ENCODE measurements at regions of chr9 and their contacts with region 1.

Region 1: DNA sequence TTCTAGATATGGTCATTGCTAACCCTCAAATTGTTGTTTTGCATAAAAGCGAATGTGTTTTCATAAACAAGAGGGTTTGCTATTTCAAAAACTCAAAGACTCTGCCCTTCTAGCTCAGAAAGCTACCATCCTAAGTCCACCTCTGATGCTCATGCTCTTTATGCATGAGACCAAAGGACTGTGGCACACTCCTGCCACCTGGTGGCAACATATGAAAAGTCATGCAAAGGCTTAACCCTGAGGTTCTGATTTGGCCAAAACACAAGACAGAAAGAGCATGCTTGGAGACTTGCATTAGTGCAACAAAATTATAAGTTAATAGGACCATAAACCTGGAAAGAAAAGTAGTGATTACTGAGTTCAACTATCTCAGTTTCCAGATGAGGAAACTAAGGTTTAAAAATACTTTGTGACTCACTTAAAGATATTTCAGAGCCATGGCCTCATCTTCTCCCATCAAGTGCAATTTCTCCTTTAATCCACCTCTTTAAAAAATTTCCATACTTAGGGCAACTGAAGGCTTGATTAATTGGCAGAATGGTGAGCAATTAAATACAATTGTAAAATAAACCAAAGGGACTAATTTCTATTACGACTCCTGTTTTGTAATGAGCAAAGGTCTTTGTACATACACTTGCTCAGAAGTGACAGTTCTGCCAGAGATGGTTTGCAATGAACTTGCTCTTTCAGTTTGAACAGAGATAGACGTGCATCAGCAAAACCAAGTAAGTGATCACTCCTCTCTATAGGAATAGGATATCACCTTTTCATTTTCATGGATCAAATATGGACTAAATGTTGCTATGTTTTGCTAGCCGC is 110.7 kb upstream of the RAD23B start:
- DNase-seq: peak; percentile 82
- H3K4me3 Mint-ChIP-seq: no peak overlapping the region
- H3K27ac Mint-ChIP-seq: no peak overlapping the region
- H3K4me1 Mint-ChIP-seq: peaks cover 15% of the 10 kb centered on the region
- H3K27me3 Mint-ChIP-seq: no peaks in the 10 kb centered on the region

Region 2: GRCh38 chr9:105881654-105882349 is 1290.6 kb before region 1 on chr9:
- CTCF ChIA-PET with region 1: no interaction called
- intact Hi-C with region 1: loop called (anchors 5 kb)
- DNase-seq: peak; percentile 87
- H3K4me3 Mint-ChIP-seq: no peak overlapping the region
- H3K27ac Mint-ChIP-seq: no peak overlapping the region
- H3K4me1 Mint-ChIP-seq: peaks cover 7% of the 10 kb centered on the region
- H3K27me3 Mint-ChIP-seq: peaks cover 2% of the 10 kb centered on the region

Region 3: DNA sequence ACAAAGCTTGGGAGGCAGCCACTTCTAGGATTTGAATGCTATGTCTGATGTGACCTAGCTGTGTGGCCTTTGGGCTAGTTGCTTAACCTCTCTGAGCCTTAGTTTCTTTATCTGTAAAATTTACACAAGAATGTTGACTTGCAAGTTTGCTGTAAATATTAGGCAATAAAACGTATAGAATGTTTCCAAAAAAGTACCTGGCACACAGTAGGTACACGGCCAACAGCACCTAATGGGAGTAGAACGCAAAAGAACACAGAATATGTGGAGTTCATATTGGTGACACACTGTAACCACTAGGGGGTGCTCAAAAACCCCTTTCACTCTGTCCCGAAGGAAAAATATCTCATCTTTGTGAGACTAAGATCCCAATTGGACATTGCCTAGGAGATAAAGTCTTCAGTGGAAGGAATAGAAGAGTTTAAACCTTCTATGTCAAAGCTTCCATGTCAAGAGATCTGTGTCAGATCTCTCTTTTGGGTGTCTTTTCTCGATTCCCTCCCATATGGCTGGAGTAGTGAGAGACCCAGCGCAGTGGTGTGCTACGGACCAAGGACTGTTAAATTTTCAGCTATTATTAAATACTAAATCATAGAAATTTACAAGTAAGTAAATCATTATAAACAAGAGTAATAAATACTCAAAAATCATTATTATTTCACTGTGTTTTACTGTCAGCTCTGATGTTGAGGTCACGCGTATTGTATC is 34.7 kb before region 1 on chr9:
- CTCF ChIA-PET with region 1: interaction called, 22 read pairs
- intact Hi-C with region 1: no loop called
- DNase-seq: peak; percentile 8
- H3K4me3 Mint-ChIP-seq: no peak overlapping the region
- H3K27ac Mint-ChIP-seq: no peak overlapping the region
- H3K4me1 Mint-ChIP-seq: no peaks in the 10 kb centered on the region
- H3K27me3 Mint-ChIP-seq: peaks cover 3% of the 10 kb centered on the region

Region 4: DNA sequence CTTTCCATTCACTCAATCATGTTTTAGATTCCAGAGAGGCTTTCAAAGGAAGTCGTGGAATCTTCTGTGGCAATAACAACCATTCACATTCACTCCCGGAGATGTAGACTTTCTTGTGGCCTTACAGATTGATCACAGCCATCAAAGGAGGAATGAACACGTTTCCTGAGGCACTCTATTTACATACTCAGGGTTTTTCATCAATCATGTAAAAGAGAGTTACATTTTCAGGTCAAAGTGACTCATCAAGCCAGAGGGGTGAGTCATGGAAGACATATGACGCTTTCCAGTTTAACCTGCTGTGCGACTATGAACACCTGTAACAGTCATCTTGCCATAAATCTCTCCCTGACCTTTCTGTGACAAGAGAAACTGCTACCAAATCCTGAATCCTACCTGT is 71.4 kb after region 1 on chr9:
- CTCF ChIA-PET with region 1: no interaction called
- intact Hi-C with region 1: loop called (anchors 1 kb)
- DNase-seq: peak; percentile 79
- H3K4me3 Mint-ChIP-seq: no peak overlapping the region
- H3K27ac Mint-ChIP-seq: peak overlapping the region; percentile 73
- H3K4me1 Mint-ChIP-seq: peaks cover 33% of the 10 kb centered on the region
- H3K27me3 Mint-ChIP-seq: peaks cover 1% of the 10 kb centered on the region

Measured in activated naive CD4-positive, alpha-beta T cell treated with anti-CD3 and anti-CD28 coated beads for 36 hours (primary cell).